ENCODE measurements at regions of chr1 and their contacts with region 1.

Region 1: DNA sequence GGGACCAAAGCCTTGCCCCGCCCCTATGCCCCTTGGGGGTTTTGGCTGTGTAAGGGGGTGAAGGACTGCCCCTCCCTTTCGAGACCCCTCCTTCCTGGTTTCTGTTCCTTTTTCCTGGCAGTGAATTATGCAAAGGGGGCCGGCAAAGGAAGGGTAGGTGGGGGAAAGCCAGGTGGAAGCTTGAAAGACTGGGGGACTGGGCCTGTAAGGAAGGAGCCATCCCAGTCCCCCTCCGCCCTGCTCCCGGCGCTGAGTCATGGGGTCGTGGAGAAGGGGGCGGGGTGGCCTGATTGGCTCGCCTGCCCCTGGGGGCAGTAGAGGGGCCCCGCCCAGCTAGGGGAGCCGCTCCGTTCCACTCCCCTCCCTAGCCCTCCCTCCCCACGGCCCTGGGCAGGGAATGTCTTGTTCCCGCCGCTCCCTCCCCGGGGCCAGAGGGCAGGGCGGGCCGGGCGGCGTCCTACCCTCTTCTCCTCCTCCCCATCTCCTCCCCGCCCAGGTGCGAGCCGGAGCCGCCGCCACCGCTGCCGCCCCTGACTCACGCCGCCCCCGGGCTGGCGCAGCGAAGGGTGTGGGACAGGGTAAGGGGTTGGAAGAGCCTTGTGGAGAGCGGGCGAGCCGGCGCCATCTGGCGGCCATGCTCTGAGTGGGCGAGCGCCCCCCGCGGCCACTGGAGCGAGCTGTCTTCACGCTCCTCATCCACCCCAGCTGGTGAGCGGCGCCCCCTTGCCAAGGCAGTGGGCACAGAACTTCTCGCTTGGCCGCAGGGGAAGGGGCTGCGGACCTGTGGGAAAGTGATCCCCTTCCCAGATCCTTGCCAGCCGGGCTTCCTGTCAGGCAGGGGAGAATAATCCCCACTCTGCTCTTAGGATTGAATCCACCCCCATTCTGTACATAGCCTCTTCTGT is 14.7 kb downstream of the ZBTB7B start:
- DNase-seq: peak; percentile 99
- H3K4me3 ChIP-seq: peak overlapping the region in 2 of 3 experiments; percentile 12 to 31
- H3K27ac ChIP-seq: peak overlapping the region; percentile 50
- H3K4me1 ChIP-seq: peaks cover 23% of the 10 kb centered on the region
- H3K27me3 ChIP-seq: no peaks in the 10 kb centered on the region
- CTCF ChIP-seq: peak; percentile 97 to 100

Region 2: GRCh38 chr1:154703170-154703569 is 314.1 kb before region 1 on chr1:
- CTCF ChIA-PET with region 1: no interaction called
- dilution Hi-C with region 1: no loop called
- in situ Hi-C with region 1: no loop called
- intact Hi-C with region 1: no loop called
- DNase-seq: no peak
- H3K4me3 ChIP-seq: no peak overlapping the region
- H3K27ac ChIP-seq: no peak overlapping the region
- H3K4me1 ChIP-seq: peaks cover 4% of the 10 kb centered on the region
- H3K27me3 ChIP-seq: no peaks in the 10 kb centered on the region
- CTCF ChIP-seq: no peak

Region 3: GRCh38 chr1:154961497-154962262 is 55.6 kb before region 1 on chr1 and contains the start of gene PYGO2:
- CTCF ChIA-PET with region 1: no interaction called
- dilution Hi-C with region 1: no loop called
- in situ Hi-C with region 1: loop called in 1 of 2 experiments (anchors 10 kb)
- intact Hi-C with region 1: loop called (anchors 1 kb)
- DNase-seq: peak; percentile 81
- H3K4me3 ChIP-seq: peak within 1 kb of the TSS; percentile 55 to 83 (median 71)
- H3K27ac ChIP-seq: peak within 1 kb of the TSS; percentile 49
- H3K4me1 ChIP-seq: peaks cover 24% of the 10 kb centered on the region
- H3K27me3 ChIP-seq: no peaks in the 10 kb centered on the region
- CTCF ChIP-seq: peak; percentile 23 to 32
- total RNA-seq, gene PYGO2: 12.3 to 24.4 TPM

Region 4: DNA sequence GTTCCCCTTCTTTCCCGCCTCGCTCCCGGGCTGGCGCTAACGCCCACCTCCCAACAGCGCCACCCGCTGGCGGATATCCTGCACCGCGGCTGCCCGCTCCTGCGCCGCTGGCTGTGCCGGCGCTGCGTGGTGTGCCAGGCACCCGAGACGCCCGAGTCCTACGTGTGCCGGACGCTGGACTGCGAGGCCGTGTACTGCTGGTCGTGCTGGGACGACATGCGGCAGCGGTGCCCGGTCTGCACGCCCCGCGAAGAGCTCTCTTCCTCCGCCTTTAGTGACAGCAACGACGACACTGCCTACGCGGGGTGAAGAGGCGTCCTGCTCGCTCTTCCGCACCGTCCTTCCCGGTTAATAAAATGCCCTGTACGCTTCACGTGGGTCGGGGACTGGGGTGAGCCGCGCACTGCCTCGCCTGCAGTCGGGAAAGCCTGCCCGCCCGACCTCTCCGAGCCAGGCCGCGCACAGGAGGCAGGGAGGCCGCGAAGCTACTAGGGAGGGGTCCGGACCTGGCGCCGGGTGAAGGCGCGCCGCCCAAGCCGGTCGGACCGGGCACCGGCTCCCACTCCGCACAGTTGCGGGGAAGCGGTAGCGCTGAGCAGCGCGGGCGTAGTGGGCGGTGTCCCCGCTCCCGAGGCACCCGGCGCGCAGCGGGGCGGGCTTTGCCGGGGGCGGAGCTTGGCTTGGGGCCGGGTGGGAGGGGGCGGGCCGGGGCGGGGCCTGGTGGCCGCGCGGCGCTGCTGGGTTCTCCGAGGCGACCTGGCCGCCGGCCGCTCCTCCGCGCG is 33.5 kb after region 1 on chr1 and contains the start of gene ADAM15:
- CTCF ChIA-PET with region 1: interaction called, 5 read pairs
- dilution Hi-C with region 1: no loop called
- in situ Hi-C with region 1: no loop called
- intact Hi-C with region 1: loop called (anchors 1 kb)
- DNase-seq: peak; percentile 73
- H3K4me3 ChIP-seq: peak within 1 kb of the TSS; percentile 88 to 96 (median 90)
- H3K27ac ChIP-seq: peak within 1 kb of the TSS; percentile 63
- H3K4me1 ChIP-seq: peaks cover 31% of the 10 kb centered on the region
- H3K27me3 ChIP-seq: no peaks in the 10 kb centered on the region
- CTCF ChIP-seq: peak; percentile 72 to 95
- total RNA-seq, gene ADAM15: 111 to 127 TPM